ENCODE measurements at regions of chr9 and their contacts with region 1.

Region 1: GRCh38 chr9:33374634-33375213 is 27.6 kb downstream of the AQP7 start:
- DNase-seq: peak; percentile 84
- H3K4me3 ChIP-seq: peak overlapping the region in 1 of 2 experiments; percentile 33; a peak in 1 of 4 replicates
- H3K27ac ChIP-seq: no peak overlapping the region
- H3K4me1 ChIP-seq: peaks cover 0 to 6% of the 10 kb centered on the region in 2 experiments; a peak in 1 of 4 replicates
- H3K27me3 ChIP-seq: no peaks in the 10 kb centered on the region
- CTCF ChIP-seq: peak; percentile 93
- EP300 ChIP-seq: no peak
- RAD21 ChIP-seq: peak; percentile 79

Region 2: DNA sequence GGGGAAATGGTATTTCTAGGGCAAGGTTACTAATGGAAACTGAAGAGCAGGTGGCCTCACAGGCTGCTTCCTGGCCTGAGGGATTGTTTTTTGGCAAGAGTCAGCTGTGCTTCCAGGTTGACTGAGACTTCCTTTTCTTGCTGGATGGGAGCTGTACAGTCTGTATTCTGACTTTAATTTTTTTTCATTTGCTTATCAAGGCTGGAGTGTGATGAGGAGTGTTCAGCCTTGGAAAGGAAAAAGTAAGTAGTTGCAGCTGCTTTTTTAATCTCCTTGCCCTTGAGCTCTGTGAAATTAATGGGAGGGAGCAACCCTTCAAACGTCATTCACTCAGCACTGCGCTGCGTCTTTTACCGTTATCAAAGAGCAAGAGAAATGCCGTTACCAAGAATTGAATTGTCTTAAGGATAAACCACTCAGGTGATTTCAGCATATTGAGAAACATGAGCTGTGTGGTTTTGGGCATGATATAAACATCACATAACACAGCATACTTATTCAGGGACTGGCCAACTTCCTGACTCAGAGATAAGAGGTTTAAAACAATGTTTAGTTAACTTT is 20.0 kb before region 1 on chr9:
- CTCF ChIA-PET with region 1: interaction called, 17 read pairs
- POLR2A ChIA-PET with region 1: no interaction called
- DNase-seq: no peak
- H3K4me3 ChIP-seq: no peak overlapping the region
- H3K27ac ChIP-seq: no peak overlapping the region
- H3K4me1 ChIP-seq: peaks cover 0 to 3% of the 10 kb centered on the region in 2 experiments; a peak in 1 of 4 replicates
- H3K27me3 ChIP-seq: no peaks in the 10 kb centered on the region
- CTCF ChIP-seq: no peak
- EP300 ChIP-seq: no peak
- RAD21 ChIP-seq: no peak

Region 3: DNA sequence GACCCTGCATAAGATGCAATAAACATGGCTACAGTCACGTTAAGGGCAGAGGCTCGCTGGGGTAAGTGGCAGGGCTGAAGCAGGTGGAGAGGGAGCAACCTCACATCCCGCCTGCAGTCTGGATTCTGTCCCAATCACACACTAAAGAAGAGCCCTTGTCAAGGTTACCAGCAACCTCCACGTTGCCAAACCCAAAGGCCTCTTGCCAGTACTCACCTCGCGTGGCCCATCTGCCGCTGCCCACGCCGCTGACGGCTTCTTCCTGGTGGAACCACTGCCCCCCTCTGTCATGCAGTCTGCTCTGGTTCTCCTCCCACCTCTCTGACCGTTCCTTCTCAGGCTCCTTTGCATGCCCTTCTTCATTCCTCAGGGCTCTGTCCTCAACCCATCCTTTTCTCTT is 18.9 kb after region 1 on chr9:
- CTCF ChIA-PET with region 1: interaction called, 17 read pairs
- POLR2A ChIA-PET with region 1: no interaction called
- DNase-seq: no peak
- H3K4me3 ChIP-seq: no peak overlapping the region
- H3K27ac ChIP-seq: no peak overlapping the region
- H3K4me1 ChIP-seq: peaks cover 2 to 6% of the 10 kb centered on the region in 2 experiments; a peak in 2 of 4 replicates
- H3K27me3 ChIP-seq: no peaks in the 10 kb centered on the region
- CTCF ChIP-seq: no peak
- EP300 ChIP-seq: no peak
- RAD21 ChIP-seq: no peak

Region 4: GRCh38 chr9:33415501-33416038 is 40.8 kb after region 1 on chr9:
- CTCF ChIA-PET with region 1: interaction called, 52 read pairs
- POLR2A ChIA-PET with region 1: no interaction called
- DNase-seq: peak; percentile 76
- H3K4me3 ChIP-seq: no peak overlapping the region
- H3K27ac ChIP-seq: no peak overlapping the region
- H3K4me1 ChIP-seq: no peaks in the 10 kb centered on the region
- H3K27me3 ChIP-seq: no peaks in the 10 kb centered on the region
- CTCF ChIP-seq: peak; percentile 71
- EP300 ChIP-seq: no peak
- RAD21 ChIP-seq: peak; percentile 54

Region 5: DNA sequence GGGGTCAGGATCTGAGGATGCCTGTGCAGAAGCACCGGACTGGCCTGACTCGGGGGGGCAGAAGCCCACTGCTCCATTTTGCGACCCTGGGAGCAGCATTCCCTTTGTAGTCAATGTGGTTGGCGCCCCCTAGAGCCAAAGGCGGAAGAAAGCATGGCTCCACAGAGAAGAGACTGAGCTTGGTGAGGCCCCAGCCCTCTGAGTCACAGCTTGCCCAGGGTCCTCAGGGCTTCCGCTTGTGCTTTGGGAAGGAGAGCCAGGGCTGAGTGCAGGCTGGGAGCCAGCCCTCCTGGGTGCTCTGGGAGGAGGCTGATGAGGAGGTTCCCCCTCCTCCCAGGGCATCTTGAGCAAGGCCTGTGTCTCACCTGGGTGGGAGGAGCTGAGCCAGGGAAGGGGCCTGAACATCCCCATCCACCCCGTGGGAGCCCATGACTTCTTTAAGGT is 78.1 kb after region 1 on chr9:
- CTCF ChIA-PET with region 1: interaction called, 27 read pairs
- POLR2A ChIA-PET with region 1: no interaction called
- DNase-seq: peak; percentile 76
- H3K4me3 ChIP-seq: peak overlapping the region in 1 of 2 experiments; percentile 13; a peak in 1 of 4 replicates
- H3K27ac ChIP-seq: no peak overlapping the region
- H3K4me1 ChIP-seq: peaks cover 0 to 9% of the 10 kb centered on the region in 2 experiments; a peak in 1 of 4 replicates
- H3K27me3 ChIP-seq: no peaks in the 10 kb centered on the region
- CTCF ChIP-seq: peak; percentile 79
- EP300 ChIP-seq: no peak
- RAD21 ChIP-seq: peak; percentile 67

Measured in SK-N-SH (cell line).